HAP-1 (cell line): ENCODE measurements at regions of chr10 and their contacts with region 1.

Region 1: GRCh38 chr10:6108603-6109443 is 20.0 kb downstream of the RBM17 start:
- DNase-seq: peak; percentile 45 to 49
- H3K4me3 ChIP-seq: no peak overlapping the region
- H3K4me1 ChIP-seq: peaks cover 11% of the 10 kb centered on the region; the same call in 1 of the 2 replicates
- H3K27me3 ChIP-seq: no peaks in the 10 kb centered on the region

Region 2: GRCh38 chr10:5737352-5737751 is 371.5 kb before region 1 on chr10:
- in situ Hi-C with region 1: no loop called
- DNase-seq: peak in 1 of 2 experiments; percentile 30
- H3K4me3 ChIP-seq: no peak overlapping the region
- H3K4me1 ChIP-seq: no peaks in the 10 kb centered on the region
- H3K27me3 ChIP-seq: no peaks in the 10 kb centered on the region

Region 3: DNA sequence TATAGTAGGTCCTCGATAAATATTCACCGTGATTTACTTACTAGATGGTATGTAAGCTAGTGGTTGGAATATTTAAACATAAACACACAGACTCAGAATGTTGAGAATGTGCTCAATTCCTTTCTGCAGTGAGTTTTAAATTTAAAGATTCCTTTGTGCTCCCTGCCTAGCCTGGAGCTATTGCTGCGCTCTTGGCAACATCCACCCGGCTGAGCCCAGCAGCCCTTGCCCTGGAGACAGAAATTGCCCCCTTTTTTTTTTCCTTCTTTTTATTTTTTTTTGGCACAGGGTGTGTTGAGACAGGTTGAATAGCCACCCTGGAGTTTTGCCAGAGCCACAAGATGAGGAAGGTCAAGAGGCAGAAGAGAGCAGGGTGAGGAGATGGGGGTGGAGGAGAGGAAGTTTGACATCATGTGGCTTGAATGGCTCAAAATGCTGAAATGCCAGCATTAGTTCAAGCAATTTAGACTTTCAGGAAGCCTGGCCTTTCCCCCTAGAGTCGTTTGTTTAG is 290.5 kb after region 1 on chr10:
- in situ Hi-C with region 1: loop called (anchors 10 kb)
- DNase-seq: no peak
- H3K4me3 ChIP-seq: no peak overlapping the region
- H3K4me1 ChIP-seq: no peaks in the 10 kb centered on the region
- H3K27me3 ChIP-seq: no peaks in the 10 kb centered on the region